GM10248 (cell line): ENCODE measurements at regions of chr17 and their contacts with region 1.

Region 1: DNA sequence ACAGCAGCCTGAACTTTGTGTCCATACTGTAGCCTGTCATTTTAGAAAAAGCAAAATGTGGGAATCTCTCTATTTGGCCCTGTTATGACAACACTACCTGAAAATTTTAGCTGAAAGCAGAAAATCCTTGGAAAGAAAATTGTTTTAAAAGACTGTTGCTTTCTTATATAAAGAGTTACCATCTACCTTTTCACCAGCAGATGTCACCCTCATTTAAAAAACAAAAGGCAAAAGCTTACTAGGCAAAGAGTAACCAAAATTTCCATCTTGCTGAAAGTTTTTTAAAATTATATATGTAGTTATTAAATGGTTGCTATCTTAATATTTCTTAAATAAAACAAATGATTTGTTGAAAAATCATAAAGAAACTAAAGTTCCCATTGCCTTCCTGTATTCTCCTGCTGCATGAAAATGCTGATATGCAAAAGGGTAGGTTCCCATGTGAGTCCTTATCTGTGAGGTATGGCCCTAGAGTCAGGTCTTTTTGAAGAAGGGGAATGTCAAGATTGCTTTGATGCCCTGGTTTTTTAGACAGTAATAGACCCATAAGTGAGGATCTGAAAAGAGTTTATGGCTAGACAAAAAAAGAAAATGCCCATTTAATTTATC is 61.0 kb downstream of the TNRC6C start:
- DNase-seq: no peak
- CTCF ChIP-seq: peak; percentile 44

Region 2: DNA sequence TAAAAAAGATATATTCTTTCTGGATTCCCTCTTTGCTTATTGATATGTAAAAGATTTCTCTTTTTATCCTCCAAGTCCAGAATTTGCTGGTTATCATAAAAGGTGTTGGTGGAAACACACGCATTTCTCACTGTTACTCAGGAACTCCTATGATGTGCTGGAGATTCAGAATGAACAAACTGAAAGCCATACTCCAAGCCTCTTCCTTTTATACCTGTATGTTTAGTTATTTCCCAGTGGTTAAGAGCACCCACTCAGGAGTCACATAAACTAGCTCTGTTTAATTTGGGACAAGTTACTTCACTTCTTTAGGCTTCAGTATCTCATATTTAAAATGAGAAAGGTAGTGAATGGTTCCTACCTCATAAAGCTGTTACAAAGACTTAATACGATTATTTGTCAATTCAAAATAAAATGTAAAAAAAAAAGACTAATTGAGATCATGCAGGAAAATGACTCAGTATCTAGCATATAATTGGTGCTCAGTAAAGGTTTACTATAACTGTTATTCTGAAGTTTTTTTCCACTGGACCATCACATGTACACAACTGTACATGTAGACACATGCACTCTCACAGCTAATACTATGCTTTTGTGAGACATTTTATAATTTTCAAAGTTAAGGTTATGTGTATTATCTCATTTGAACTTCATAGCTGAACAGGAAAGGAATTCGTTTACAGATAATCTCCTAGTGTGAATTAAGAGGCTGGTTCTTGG is 13.9 kb before region 1 on chr17:
- CTCF ChIA-PET with region 1: interaction called, 34 read pairs
- POLR2A ChIA-PET with region 1: no interaction called
- DNase-seq: no peak
- CTCF ChIP-seq: no peak

Region 3: DNA sequence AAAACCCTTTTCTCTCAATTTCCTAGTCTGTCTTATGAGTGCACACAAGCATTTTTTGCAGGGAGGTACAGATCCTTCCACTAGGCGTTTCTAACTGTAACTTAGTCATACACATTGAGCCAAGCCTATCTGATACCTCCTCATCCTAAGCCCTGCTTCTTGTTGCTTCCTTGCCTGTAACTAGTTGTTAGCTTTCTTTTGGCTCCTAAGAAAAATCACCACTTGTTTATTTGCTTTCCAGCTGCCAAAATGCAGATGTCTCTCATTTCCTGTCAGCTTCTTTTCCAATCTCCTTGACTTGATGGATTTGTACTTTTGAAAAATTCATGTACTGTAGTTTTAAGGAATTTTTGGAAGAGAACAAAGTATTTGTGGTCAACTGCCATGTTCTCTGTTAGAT is 12.7 kb after region 1 on chr17:
- CTCF ChIA-PET with region 1: interaction called, 40 read pairs
- POLR2A ChIA-PET with region 1: no interaction called
- DNase-seq: no peak
- CTCF ChIP-seq: no peak

Region 4: DNA sequence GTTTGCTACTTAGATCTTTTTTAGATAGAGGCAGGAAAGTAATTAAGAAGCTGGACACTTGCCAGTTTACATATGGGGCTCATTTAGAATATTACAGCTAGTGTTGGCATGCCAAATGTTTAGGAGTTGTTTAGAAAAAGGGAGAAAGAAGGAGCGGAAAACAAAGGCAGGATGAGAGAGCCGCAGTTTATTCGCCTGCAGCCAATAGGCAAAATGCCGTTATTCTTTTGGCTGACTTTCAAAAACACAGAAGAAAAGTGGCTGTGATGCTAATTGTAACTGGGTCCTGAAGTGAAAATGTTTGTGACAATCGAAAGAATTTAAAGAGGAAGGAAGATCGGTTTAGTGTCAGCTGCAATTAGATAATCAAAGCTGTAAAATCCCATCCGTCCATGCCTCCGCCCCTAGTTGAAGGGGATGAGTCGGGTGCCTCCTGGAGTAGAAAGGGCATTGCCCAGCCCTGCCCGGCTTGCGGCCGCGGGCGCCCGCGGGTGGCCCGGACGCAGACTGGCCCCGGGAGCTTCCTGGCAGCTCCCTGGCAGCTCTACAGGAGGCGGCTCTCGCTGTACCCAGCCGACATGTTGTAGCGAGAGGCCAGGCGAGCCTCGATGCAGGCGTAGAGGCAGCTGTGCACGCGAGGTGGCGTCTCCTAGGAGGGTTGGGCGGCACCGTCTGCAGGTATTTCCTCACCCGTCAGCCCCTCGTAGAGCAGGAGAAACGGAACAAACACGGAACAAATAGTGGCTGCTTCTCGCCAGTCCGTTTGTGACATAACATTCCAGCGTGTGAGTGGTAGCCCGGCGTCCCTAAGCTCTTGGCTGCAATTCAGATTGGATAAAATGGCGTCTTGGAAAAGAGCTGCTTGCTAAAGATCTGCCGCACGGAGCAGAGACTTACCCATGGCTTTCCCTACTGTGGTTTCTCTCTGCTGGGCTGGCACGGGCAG is 21.2 kb after region 1 on chr17:
- CTCF ChIA-PET with region 1: interaction called, 23 read pairs
- POLR2A ChIA-PET with region 1: no interaction called
- DNase-seq: peak; percentile 45
- CTCF ChIP-seq: no peak

Region 5: GRCh38 chr17:78263063-78263743 is 243.7 kb after region 1 on chr17:
- CTCF ChIA-PET with region 1: no interaction called
- POLR2A ChIA-PET with region 1: no interaction called
- DNase-seq: no peak
- CTCF ChIP-seq: no peak